CD4-positive, alpha-beta memory T cell (primary cell): ENCODE measurements at regions of chr1 and their contacts with region 1.

Region 1: DNA sequence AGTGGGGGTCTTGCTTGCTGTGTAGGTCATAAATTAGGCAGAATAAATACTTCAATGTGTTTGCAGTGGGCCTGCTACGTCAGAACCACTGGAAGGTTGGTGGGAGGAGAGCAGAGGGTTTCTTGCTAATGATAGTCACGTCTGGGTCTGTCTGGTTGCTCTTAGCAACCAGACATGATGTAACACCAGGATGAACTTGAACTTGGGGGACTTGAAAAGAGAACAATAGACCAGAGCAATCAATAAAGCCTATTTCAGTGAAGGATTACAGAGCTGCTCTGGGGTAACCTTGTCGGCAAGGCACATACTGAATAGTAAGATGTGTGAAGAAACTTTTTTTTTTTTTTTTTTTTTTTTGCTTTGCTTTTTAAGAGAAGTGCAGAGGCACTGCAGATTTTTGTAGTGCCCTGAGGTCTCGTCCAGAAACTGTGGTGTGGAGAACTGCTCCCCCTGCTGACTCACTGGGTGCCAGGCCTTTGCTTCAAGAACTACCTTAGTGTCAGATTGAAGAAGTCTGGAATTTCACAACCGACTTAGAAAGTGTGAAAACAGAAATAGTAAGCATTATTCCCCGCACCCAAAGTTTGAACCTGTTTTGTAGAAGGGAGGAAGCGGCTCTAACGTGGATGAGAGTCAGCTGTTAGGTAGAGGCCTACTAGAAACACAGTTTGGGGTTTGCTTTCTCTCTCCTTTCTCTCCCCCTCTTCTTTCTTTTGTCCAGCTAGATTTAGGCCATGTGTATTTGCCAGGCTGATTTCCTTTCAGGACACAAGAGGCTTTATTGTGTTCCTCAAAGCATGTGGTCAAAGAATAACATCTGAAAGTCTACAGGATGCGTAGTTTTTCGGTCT is 271.6 kb downstream of the TM2D1 start:
- DNase-seq: peak; percentile 58 to 72 (median 63)
- H3K4me3 ChIP-seq: no peak overlapping the region
- H3K4me3 Mint-ChIP-seq: peak overlapping the region in 2 of 8 donors; percentile 11 to 26
- H3K27ac ChIP-seq: no peak overlapping the region
- H3K27ac Mint-ChIP-seq: peak overlapping the region; percentile 32 to 91 (median 81)
- H3K4me1 ChIP-seq: no peaks in the 10 kb centered on the region
- H3K4me1 Mint-ChIP-seq: peaks cover 5 to 7% (median 5%) of the 10 kb centered on the region in 4 donors
- H3K27me3 ChIP-seq: no peaks in the 10 kb centered on the region
- H3K27me3 Mint-ChIP-seq: no peaks in the 10 kb centered on the region

Region 2: DNA sequence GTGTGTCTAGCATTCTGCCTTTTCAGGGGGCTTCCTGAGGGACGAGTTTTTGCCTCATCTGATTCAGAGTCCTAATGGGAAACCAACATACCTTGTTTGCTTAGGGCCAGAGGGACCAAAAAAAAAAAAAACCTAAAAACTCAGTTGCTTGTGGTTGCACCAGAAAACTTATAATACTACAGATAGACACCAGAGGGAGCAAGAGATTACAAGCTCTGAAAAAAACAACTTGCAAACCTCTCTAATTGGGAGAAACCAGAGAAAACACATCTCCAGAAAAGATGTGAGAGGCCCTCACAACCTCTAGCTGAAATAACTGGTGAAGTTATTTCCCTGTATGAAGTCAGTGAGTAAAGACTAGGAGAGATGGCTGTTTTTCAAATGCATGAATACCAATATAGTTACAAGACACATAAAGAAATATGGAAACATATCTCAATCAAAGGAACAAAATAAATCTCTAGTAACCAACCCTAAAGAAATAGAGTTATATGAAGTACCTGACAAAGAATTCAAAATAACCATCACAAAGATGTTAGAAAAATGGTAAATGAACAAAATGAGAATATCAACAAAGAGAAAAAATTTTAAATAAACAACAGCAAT is 604.6 kb before region 1 on chr1:
- CTCF ChIA-PET with region 1: no interaction called
- POLR2A ChIA-PET with region 1: no interaction called
- intact Hi-C with region 1: loop called (anchors 2 kb)
- DNase-seq: peak in 2 of 5 donors; percentile 2 to 5
- H3K4me3 ChIP-seq: no peak overlapping the region
- H3K4me3 Mint-ChIP-seq: no peak overlapping the region
- H3K27ac ChIP-seq: no peak overlapping the region
- H3K27ac Mint-ChIP-seq: no peak overlapping the region
- H3K4me1 ChIP-seq: no peaks in the 10 kb centered on the region
- H3K4me1 Mint-ChIP-seq: no peaks in the 10 kb centered on the region
- H3K27me3 ChIP-seq: no peaks in the 10 kb centered on the region
- H3K27me3 Mint-ChIP-seq: peaks cover 4% of the 10 kb centered on the region in 2 donors

Region 3: DNA sequence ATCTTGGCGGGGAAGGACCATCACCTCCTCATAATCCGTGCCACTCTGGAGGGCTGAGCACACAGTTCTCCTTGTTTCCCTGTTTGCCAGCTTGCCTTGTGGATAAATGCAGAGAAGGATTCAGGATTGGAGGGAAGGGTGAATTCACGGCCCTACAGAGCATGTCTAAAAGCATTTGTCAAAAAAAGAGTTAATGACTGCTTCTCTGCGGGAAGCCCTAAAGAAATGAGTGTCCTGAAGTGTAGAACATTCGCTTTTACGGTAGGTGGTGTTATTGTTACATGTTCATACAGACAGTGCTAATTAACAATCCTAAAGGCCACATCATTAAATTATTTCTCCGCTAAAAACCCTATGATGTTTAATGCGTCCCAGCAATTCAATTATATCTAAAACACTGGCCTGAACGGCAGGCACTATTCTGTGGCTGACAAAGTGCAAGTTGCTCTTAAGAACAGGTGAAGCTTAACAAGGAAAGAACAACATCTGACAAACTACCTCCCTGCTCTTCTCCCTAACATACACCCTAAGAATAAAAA is 483.3 kb before region 1 on chr1:
- CTCF ChIA-PET with region 1: interaction called, 4 read pairs
- POLR2A ChIA-PET with region 1: no interaction called
- intact Hi-C with region 1: loop called (anchors 2 kb)
- DNase-seq: no peak
- H3K4me3 ChIP-seq: no peak overlapping the region
- H3K4me3 Mint-ChIP-seq: no peak overlapping the region
- H3K27ac ChIP-seq: no peak overlapping the region
- H3K27ac Mint-ChIP-seq: no peak overlapping the region
- H3K4me1 ChIP-seq: no peaks in the 10 kb centered on the region
- H3K4me1 Mint-ChIP-seq: no peaks in the 10 kb centered on the region
- H3K27me3 ChIP-seq: no peaks in the 10 kb centered on the region
- H3K27me3 Mint-ChIP-seq: peaks cover 9 to 30% of the 10 kb centered on the region in 2 donors

Region 4: GRCh38 chr1:61287734-61288133 is 165.6 kb before region 1 on chr1:
- CTCF ChIA-PET with region 1: no interaction called
- POLR2A ChIA-PET with region 1: no interaction called
- intact Hi-C with region 1: no loop called
- DNase-seq: no peak
- H3K4me3 ChIP-seq: no peak overlapping the region
- H3K4me3 Mint-ChIP-seq: no peak overlapping the region
- H3K27ac ChIP-seq: no peak overlapping the region
- H3K27ac Mint-ChIP-seq: no peak overlapping the region
- H3K4me1 ChIP-seq: no peaks in the 10 kb centered on the region
- H3K4me1 Mint-ChIP-seq: no peaks in the 10 kb centered on the region
- H3K27me3 ChIP-seq: no peaks in the 10 kb centered on the region
- H3K27me3 Mint-ChIP-seq: no peaks in the 10 kb centered on the region

Region 5: DNA sequence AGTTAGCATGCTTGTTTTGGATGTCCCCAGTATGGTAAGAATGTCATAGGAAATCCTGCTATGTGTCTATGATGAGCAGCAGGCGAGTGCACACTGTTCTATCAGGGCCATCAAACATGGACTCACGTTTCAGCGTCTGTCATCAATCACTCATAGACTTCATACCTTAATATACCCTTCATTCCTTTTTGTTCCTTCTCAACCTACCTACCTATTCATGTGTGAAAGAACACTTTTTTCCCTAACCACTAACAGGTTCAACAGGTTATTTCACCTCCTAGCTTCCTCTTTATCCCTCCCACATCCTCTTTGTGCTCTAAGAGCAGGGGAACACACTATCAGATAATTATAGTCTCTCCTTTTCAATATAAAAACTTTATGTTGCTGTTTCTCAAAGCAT is 29.0 kb before region 1 on chr1:
- CTCF ChIA-PET with region 1: no interaction called
- POLR2A ChIA-PET with region 1: no interaction called
- intact Hi-C with region 1: no loop called
- DNase-seq: no peak
- H3K4me3 ChIP-seq: no peak overlapping the region
- H3K4me3 Mint-ChIP-seq: no peak overlapping the region
- H3K27ac ChIP-seq: no peak overlapping the region
- H3K27ac Mint-ChIP-seq: no peak overlapping the region
- H3K4me1 ChIP-seq: no peaks in the 10 kb centered on the region
- H3K4me1 Mint-ChIP-seq: peaks cover 0 to 3% (median 0%) of the 10 kb centered on the region in 4 donors
- H3K27me3 ChIP-seq: no peaks in the 10 kb centered on the region
- H3K27me3 Mint-ChIP-seq: no peaks in the 10 kb centered on the region